Gastrocnemius medialis (tissue), 4 donors: ENCODE measurements at regions of chr5 and their contacts with region 1.

Region 1: DNA sequence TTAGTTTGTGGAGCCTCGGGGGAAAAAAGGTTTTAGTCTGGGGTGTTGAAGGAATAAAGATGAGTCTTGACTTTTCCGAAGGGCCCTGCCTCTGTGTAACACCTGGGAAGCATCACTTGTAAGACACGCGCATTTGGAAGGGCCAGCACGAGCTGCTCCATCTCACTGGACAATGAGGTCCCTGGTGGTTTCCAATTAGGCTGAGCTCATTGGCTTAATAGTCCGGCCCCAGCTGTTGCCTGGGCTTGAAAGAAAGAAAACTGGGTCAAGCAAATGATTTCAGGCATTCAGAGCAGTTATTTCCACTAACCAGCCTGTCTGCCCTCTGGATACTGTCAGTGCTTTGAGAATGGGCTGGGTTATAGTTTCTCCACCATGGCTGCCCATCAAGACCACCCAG is 64.5 kb downstream of the NSUN2 start:
- DNase-seq: no peak
- ATAC-seq: no peak
- H3K4me3 ChIP-seq: no peak overlapping the region
- H3K27ac ChIP-seq: no peak overlapping the region
- H3K4me1 ChIP-seq: no peaks in the 10 kb centered on the region
- H3K27me3 ChIP-seq: no peaks in the 10 kb centered on the region
- CTCF ChIP-seq: no peak
- POLR2A ChIP-seq: no peak

Region 2: GRCh38 chr5:7642029-7642428 is 1073.6 kb after region 1 on chr5:
- in situ Hi-C with region 1: no loop called
- intact Hi-C with region 1: loop called (anchors 5 kb)
- DNase-seq: no peak
- ATAC-seq: no peak
- H3K4me3 ChIP-seq: no peak overlapping the region
- H3K27ac ChIP-seq: no peak overlapping the region
- H3K4me1 ChIP-seq: peaks cover 9 to 26% of the 10 kb centered on the region in 2 donors
- H3K27me3 ChIP-seq: no peaks in the 10 kb centered on the region
- CTCF ChIP-seq: no peak
- POLR2A ChIP-seq: no peak